Endothelial cell of umbilical vein (primary cell): ENCODE measurements at regions of chr1 and their contacts with region 1.

Region 1: DNA sequence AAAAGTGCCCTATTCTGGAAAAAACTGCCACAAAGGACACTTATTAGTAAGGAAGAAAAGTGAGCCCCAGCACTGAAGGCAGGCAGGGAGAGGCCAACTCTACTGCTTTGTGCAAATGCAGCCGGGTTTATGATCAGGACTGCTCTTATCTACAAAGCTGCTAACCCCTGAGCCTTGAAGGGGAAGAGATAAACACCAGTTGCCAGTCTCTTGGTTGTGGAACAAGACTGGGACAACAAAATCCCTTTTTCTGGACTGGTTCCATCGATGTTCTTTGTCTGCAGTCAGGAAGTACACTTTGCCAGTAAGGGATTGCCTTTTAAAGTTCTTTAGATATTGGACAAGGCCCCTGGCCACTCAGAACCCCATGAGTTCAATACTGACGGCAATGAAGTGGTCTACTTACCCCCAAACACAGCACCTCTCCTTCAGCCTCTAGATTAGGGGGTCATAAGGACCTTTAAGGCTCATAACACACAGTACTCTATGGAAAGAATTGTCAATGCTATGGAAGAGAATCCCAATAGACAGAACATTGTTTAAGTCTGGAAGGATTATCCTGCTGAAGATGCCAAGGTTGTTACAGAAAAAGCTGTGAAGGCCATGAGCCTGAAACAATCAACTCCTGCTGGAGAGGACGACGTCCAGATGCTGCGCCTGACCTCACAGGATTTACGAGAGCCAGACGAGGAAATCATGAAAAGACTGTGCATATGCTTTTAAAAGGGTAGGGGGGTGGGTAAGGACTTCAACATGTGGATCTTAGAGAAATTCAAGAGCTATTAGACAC is 43.6 kb downstream of the GNB1 start:
- DNase-seq: peak; percentile 85
- H3K4me3 ChIP-seq: no peak overlapping the region
- H3K27ac ChIP-seq: peak overlapping the region; percentile 10
- H3K4me1 ChIP-seq: peaks cover 9% of the 10 kb centered on the region
- H3K27me3 ChIP-seq: no peaks in the 10 kb centered on the region
- CTCF ChIP-seq: no peak
- POLR2A ChIP-seq: no peak

Region 2: DNA sequence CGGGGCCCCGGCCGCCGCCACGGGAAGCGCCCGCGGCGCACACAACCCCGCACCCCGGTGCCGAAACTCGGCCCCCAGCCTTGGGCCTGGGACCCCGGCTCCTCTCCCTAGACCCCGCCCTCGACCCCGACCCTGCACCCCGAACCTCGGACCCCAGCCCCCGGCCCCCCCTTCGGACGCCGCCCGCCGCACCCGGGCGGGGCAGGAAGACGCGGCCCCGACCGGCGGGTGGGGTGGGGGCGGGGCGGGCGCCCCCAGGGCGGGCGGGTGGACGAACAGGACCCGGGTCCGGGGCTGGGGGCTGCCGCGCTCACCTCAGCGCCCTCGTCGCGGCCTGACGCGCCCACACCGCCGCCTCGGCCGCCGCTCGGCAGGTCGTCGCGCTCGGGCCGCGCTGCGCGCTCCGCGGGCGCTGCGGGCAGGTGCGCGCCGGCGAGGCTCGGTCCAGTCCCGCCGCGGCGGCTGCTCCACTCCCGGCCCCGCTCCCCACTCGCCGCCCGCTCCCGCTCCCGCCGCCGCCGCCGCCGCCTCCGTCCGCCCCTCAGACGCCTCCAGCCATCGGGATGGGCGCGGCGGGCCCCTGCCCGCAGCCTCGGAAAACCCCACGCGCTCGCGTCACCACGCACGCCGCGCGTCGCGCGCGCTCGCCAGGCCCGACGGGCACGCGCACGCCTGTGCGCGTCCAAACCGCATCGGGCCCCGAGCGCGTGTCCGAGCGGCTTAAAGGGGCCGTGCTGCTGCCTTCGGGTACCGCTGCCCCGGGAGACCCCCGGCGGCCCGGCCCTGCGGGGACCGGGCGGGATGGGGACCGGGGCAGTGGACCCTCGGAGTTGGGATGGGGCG is 43.5 kb after region 1 on chr1 and contains the start of gene GNB1:
- CTCF ChIA-PET with region 1: no interaction called
- POLR2A ChIA-PET with region 1: no interaction called
- dilution Hi-C with region 1: no loop called
- intact Hi-C with region 1: loop called (anchors 5 kb)
- DNase-seq: peak; percentile 86
- H3K4me3 ChIP-seq: peak within 1 kb of the TSS; percentile 79 to 99 (median 99)
- H3K27ac ChIP-seq: peak within 1 kb of the TSS; percentile 83
- H3K4me1 ChIP-seq: peaks cover 22% of the 10 kb centered on the region
- H3K27me3 ChIP-seq: no peaks in the 10 kb centered on the region
- CTCF ChIP-seq: no peak
- POLR2A ChIP-seq: no peak
- total RNA-seq, gene GNB1: 519 and 529 TPM in 2 replicates